ENCODE measurements at regions of chr11 and their contacts with region 1.

Region 1: DNA sequence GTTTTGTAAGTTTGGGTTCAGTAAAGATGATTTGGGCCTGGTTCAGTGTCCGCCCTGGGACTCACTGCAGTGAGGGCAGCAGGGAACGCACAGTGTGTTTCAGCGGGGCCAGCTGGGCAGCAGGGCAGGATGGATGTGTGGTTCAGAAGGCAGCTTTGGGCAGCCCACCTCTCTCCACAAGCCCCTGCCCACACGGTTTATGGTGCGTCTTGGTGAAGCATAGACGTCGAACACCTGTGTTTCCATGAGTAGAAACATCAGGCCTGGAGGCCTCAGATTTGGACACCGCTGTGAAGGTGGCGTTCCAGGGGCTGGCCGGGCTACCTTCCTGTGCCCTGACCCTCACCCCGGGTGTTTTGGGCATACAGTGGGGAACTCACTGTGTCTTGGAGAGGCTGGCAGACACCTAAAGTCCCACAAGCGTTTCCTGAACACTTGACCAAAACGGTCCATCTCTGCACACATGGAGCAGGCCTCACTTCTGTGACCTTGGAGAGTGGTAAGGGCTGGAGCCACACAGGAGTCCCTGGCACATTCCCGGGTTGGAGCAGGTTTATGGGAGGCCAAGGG is 59.0 kb downstream of the ST14 start:
- DNase-seq: peak in 1 of 35 experiments; percentile 15
- ATAC-seq: no peak
- H3K4me3 ChIP-seq: no peak overlapping the region
- H3K4me3 Mint-ChIP-seq: no peak overlapping the region
- H3K27ac ChIP-seq: no peak overlapping the region
- H3K27ac Mint-ChIP-seq: no peak overlapping the region
- H3K4me1 ChIP-seq: no peaks in the 10 kb centered on the region
- H3K4me1 Mint-ChIP-seq: peaks cover 6 to 11% (median 10%) of the 10 kb centered on the region in 3 donors
- H3K27me3 ChIP-seq: peaks cover 0 to 10% of the 10 kb centered on the region in 2 experiments
- H3K27me3 Mint-ChIP-seq: peaks cover 0 to 2% of the 10 kb centered on the region in 2 donors

Region 2: GRCh38 chr11:130314750-130315285 is 96.2 kb after region 1 on chr11 and contains the start of gene ZBTB44:
- CTCF ChIA-PET with region 1: no interaction called
- POLR2A ChIA-PET with region 1: interaction called in 1 of 2 experiments, 10 read pairs
- DNase-seq: peak; percentile 79 to 95 (median 89)
- ATAC-seq: peak; percentile 76 to 86 (median 80)
- H3K4me3 ChIP-seq: peak within 1 kb of the TSS; percentile 78 to 89
- H3K4me3 Mint-ChIP-seq: peak within 1 kb of the TSS; percentile 81 to 92 (median 86)
- H3K27ac ChIP-seq: peak within 1 kb of the TSS; percentile 81
- H3K27ac Mint-ChIP-seq: peak within 1 kb of the TSS; percentile 96 to 98
- H3K4me1 ChIP-seq: peaks cover 16 to 22% of the 10 kb centered on the region in 2 experiments
- H3K4me1 Mint-ChIP-seq: peaks cover 45 to 47% (median 45%) of the 10 kb centered on the region in 3 donors
- H3K27me3 ChIP-seq: no peaks in the 10 kb centered on the region
- H3K27me3 Mint-ChIP-seq: no peaks in the 10 kb centered on the region
- total RNA-seq, gene ZBTB44: 48.4 to 68.1 (median 65.2) TPM

Measured in T-cell (primary cell).